GM10248 (cell line): ENCODE measurements at regions of chr4 and their contacts with region 1.

Region 1: GRCh38 chr4:13530823-13531624 is 13.3 kb downstream of the NKX3-2 start:
- DNase-seq: peak; percentile 19
- CTCF ChIP-seq: no peak

Region 2: DNA sequence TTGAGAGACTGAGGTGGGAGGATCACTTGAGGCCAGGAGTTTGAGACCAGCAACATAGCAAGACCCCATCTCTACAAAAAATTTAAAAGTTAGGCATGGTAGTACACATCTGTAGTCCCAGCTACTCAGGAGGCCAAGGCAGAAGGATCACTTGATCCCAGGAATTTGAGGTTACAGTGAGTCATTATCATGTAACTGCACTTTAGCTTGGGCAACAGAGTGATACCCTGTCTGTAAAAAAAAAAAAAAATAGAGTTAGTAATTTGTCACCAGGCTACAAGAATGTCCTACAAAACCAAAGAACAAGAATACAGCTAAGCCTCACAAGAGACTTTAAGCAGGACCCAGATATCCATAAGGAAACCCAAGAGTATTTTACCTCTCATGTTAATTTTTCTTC is 19.9 kb before region 1 on chr4:
- CTCF ChIA-PET with region 1: no interaction called
- POLR2A ChIA-PET with region 1: no interaction called
- DNase-seq: no peak
- CTCF ChIP-seq: no peak

Region 3: GRCh38 chr4:13541720-13542576 is 10.9 kb after region 1 on chr4:
- CTCF ChIA-PET with region 1: interaction called, 13 read pairs
- POLR2A ChIA-PET with region 1: no interaction called
- DNase-seq: peak; percentile 55
- CTCF ChIP-seq: peak; percentile 60